Upper lobe of right lung (tissue), 1 donor: ENCODE measurements at regions of chr7 and their contacts with region 1.

Region 1: DNA sequence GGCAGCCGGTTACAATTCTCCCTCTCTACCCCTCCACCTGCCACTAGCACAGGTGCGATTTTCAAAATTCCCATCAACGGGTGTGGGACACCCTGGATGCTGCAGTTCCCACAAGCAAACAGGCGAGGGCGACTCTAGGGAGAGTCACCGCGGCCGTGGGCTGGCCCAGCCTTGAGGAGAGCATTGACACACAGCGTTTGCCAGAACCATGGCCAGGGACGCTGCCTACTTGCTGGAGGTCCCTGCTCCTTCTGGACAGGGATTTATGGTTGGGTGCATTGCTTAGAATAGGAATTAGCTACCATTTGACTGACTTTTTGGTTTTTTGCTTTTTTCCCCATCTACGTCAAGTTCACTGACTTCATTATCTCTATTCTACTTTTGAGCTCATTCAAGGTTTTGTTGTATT is 19.0 kb upstream of the CLDN4 start:
- DNase-seq: peak; percentile 91
- ATAC-seq: peak; percentile 99
- H3K4me3 ChIP-seq: no peak overlapping the region
- H3K27ac ChIP-seq: no peak overlapping the region
- H3K4me1 ChIP-seq: no peaks in the 10 kb centered on the region
- H3K27me3 ChIP-seq: peaks cover 7% of the 10 kb centered on the region
- CTCF ChIP-seq: peak; percentile 84

Region 2: DNA sequence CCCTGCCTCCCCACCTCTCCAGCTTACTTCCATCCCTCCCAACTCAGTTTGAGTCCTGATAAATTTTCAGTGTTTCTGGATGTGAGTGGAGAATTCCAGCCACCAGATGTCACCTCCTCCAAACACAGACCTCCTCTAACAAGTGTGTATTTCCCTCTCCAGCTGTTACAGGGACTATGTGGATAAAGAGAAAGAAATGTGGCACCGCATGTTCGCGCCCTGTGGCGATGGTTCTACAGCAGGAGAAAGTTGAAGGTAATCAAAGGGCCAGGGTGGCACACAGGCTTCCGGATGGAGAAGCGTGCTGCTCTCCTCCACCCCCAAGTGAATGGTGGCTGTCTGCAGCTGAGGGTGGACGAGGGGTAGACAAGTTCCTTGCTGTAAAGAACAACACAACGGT is 469.1 kb before region 1 on chr7:
- intact Hi-C with region 1: no loop called
- DNase-seq: no peak
- ATAC-seq: peak; percentile 73
- H3K4me3 ChIP-seq: no peak overlapping the region
- H3K27ac ChIP-seq: no peak overlapping the region
- H3K4me1 ChIP-seq: no peaks in the 10 kb centered on the region
- H3K27me3 ChIP-seq: no peaks in the 10 kb centered on the region
- CTCF ChIP-seq: peak; percentile 49

Region 3: DNA sequence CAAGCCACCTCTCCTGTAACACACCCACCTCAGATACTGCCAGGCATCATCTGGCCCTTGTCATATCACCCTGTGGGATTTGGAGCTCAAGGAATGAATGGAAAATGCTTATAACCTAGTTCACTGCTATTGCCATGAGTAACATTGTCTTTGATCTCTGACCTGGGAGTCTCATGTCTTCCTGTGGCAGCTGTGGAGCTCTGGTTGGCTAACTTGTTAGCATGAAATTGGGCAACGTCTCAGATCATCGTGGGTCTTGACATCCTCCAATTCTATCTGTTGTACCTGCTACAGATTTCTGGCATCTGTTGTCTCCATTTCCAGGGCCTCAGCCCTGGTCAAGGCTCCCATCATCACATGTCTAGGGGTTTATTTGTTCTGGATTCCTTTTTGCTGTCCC is 47.0 kb after region 1 on chr7:
- intact Hi-C with region 1: loop called (anchors 5 kb)
- DNase-seq: no peak
- ATAC-seq: no peak
- H3K4me3 ChIP-seq: no peak overlapping the region
- H3K27ac ChIP-seq: no peak overlapping the region
- H3K4me1 ChIP-seq: no peaks in the 10 kb centered on the region
- H3K27me3 ChIP-seq: peaks cover 4% of the 10 kb centered on the region
- CTCF ChIP-seq: no peak

Region 4: DNA sequence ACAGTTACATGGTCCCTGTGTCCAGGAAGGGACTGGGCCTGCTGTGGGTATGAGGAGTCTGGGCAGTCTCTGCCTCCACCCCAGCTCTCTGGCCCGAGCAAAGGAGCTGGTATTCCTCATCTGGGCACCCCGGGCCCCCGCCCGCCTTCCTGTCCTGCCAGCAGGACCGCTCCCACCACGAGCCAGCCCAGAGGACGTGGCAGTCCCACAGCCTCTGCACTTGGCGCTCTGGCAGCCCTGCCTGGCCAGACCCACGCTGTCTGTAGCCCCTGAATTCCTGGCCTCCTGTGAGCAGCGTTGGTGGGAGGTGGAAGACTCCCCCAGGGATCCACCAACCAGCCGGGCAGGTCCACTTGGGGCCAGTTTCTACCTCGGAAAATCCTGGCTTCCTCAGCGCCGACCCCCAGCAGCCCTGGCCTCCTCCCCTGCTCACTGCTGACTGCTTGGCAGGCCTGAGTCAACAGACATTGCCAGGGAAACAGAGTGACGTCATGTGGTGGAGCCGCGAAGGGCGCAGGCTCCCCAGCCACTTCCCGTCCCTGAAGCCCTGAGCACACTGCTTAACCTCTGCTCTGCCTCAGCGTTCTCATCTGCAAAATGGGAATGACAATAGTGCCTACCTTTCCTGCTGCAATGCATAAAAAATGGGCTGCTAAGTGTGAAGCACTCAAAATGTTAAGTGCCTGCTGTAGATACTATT is 250.2 kb after region 1 on chr7:
- intact Hi-C with region 1: no loop called
- DNase-seq: peak; percentile 91
- ATAC-seq: peak; percentile 93
- H3K4me3 ChIP-seq: peak overlapping the region; percentile 32
- H3K27ac ChIP-seq: peak overlapping the region; percentile 92
- H3K4me1 ChIP-seq: peaks cover 11% of the 10 kb centered on the region
- H3K27me3 ChIP-seq: no peaks in the 10 kb centered on the region
- CTCF ChIP-seq: no peak

Region 5: GRCh38 chr7:74074770-74075169 is 263.0 kb after region 1 on chr7:
- intact Hi-C with region 1: no loop called
- DNase-seq: no peak
- ATAC-seq: no peak
- H3K4me3 ChIP-seq: no peak overlapping the region
- H3K27ac ChIP-seq: no peak overlapping the region
- H3K4me1 ChIP-seq: no peaks in the 10 kb centered on the region
- H3K27me3 ChIP-seq: no peaks in the 10 kb centered on the region
- CTCF ChIP-seq: no peak

Region 6: DNA sequence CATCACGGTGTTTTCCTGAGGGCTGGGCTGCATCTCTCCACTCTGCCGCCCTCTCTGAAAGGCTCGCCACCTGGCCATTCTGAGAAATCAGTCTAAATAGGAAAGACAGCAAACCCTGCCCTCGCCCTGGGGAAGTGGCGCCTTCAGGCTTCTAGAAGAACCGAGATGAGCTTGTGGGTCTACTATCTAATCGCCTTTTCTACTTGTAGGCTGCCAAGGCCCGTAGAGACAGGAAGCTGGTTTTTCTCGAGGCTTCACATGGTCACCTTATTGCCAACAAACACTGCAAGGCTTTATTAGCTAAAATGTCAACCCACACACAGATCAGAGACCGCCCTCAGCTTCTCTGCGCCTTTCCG is 419.4 kb after region 1 on chr7:
- intact Hi-C with region 1: no loop called
- DNase-seq: no peak
- ATAC-seq: peak; percentile 16
- H3K4me3 ChIP-seq: no peak overlapping the region
- H3K27ac ChIP-seq: no peak overlapping the region
- H3K4me1 ChIP-seq: peaks cover 8% of the 10 kb centered on the region
- H3K27me3 ChIP-seq: no peaks in the 10 kb centered on the region
- CTCF ChIP-seq: no peak